Activated B cell treated with CpG ODN at 0.5 μM for 24 hours (primary cell): ENCODE measurements at regions of chr11 and their contacts with region 1.

Region 1: DNA sequence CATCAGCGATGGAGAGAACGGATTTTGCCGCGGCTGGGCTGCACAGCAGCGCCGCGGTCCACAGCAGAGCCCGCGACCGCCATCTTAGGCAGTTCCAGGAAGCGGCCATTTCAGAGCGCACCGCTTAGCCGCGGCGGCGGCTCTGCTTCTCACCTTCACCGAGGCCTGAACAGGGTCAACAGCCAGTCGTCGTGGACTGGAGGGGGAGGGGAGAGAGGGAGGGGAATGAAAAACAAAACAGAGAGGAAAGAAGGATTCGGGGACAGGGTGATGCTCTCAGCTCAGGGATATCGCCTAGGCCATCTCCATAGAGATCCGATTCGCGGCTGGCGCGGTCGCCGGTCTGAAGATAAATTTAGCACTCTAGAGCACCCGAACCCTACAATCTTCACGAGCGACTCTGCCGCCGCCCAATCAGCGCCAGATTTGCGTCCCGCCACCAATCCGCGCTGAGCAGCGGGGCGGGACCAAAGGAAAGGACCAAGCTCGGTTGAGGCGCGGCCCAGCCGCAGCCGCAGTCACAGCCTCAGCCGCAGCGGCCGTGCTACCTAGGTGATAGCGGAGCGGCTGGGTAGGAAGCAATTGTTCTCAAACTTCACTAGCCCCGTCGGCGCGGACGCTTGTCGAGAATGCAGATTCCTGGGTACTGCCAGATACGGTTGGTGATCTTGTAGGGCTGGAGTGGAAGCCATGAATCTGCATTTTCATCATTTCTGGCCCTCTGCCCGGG is at the start of gene ZBED5:
- DNase-seq: peak; percentile 93
- ATAC-seq: peak; percentile 89
- H3K4me3 Mint-ChIP-seq: peak within 1 kb of the TSS; percentile 100
- H3K27ac Mint-ChIP-seq: peak within 1 kb of the TSS; percentile 100
- H3K4me1 Mint-ChIP-seq: peaks cover 48% of the 10 kb centered on the region
- H3K27me3 Mint-ChIP-seq: no peaks in the 10 kb centered on the region
- CTCF ChIP-seq: no peak
- total RNA-seq, gene ZBED5: 111 and 116 TPM in 2 replicates

Region 2: GRCh38 chr11:10750838-10751580 is 106.9 kb before region 1 on chr11 and contains the start of gene CTR9:
- CTCF ChIA-PET with region 1: no interaction called
- POLR2A ChIA-PET with region 1: interaction called, 3 read pairs
- intact Hi-C with region 1: loop called (anchors 1 kb)
- DNase-seq: peak; percentile 90
- ATAC-seq: peak; percentile 90
- H3K4me3 Mint-ChIP-seq: peak within 1 kb of the TSS; percentile 95
- H3K27ac Mint-ChIP-seq: peak within 1 kb of the TSS; percentile 89
- H3K4me1 Mint-ChIP-seq: peaks cover 23% of the 10 kb centered on the region
- H3K27me3 Mint-ChIP-seq: no peaks in the 10 kb centered on the region
- CTCF ChIP-seq: no peak
- total RNA-seq, gene CTR9: 50.6 and 52.8 TPM in 2 replicates

Region 3: GRCh38 chr11:10838083-10838482 is 19.8 kb before region 1 on chr11:
- CTCF ChIA-PET with region 1: no interaction called
- POLR2A ChIA-PET with region 1: interaction called, 13 read pairs
- intact Hi-C with region 1: loop called (anchors 2 kb)
- DNase-seq: no peak
- ATAC-seq: no peak
- H3K4me3 Mint-ChIP-seq: no peak overlapping the region
- H3K27ac Mint-ChIP-seq: no peak overlapping the region
- H3K4me1 Mint-ChIP-seq: peaks cover 16% of the 10 kb centered on the region
- H3K27me3 Mint-ChIP-seq: no peaks in the 10 kb centered on the region
- CTCF ChIP-seq: no peak

Region 4: GRCh38 chr11:10878408-10879214 is 20.7 kb after region 1 on chr11:
- CTCF ChIA-PET with region 1: interaction called, 6 read pairs
- POLR2A ChIA-PET with region 1: interaction called, 19 read pairs
- intact Hi-C with region 1: loop called (anchors 1 kb)
- DNase-seq: no peak
- ATAC-seq: peak; percentile 84
- H3K4me3 Mint-ChIP-seq: no peak overlapping the region
- H3K27ac Mint-ChIP-seq: no peak overlapping the region
- H3K4me1 Mint-ChIP-seq: peaks cover 13% of the 10 kb centered on the region
- H3K27me3 Mint-ChIP-seq: no peaks in the 10 kb centered on the region
- CTCF ChIP-seq: no peak

Region 5: GRCh38 chr11:11841723-11842420 is 984.0 kb after region 1 on chr11 and contains the start of gene USP47:
- CTCF ChIA-PET with region 1: no interaction called
- POLR2A ChIA-PET with region 1: interaction called, 13 read pairs
- intact Hi-C with region 1: loop called (anchors 1 kb)
- DNase-seq: peak; percentile 94
- ATAC-seq: peak; percentile 81
- H3K4me3 Mint-ChIP-seq: no peak within 1 kb of the TSS
- H3K27ac Mint-ChIP-seq: no peak within 1 kb of the TSS
- H3K4me1 Mint-ChIP-seq: peaks cover 27% of the 10 kb centered on the region
- H3K27me3 Mint-ChIP-seq: peaks cover 3% of the 10 kb centered on the region
- CTCF ChIP-seq: no peak
- total RNA-seq, gene USP47: 48.5 and 50.3 TPM in 2 replicates